ENCODE measurements at regions of chr6 and their contacts with region 1.

Region 1: DNA sequence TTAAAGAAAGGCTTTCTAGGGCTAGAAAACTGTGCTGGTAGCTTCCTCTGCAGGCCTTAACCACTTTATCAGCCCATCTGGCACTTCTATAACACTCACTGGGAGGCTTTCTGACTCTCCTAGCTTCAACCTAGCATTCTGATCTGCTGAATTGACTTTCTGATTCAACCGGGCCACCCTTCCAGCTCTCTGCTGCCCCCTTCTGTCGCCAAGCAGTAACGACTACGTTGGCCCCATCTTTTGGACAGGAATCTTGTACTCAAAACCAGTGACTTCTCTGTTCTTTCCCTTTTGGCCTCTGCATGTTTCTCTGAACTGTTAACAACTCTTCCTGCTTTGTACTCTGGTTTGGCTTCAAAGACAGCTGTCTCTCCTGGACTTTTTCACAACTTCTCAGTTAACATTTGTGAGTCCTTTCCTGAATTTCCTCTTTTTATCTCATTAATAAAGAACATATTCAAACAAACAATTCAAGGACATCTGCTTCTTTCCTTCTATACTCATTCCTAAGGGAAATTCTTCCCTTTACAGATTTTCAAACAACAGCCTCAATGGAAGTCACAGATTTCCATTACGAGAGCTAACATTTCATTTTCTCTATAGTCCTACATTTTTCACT is 43.9 kb upstream of the FAM135A start:
- DNase-seq: peak; percentile 41
- ATAC-seq: peak; percentile 87
- H3K4me3 ChIP-seq: no peak overlapping the region
- H3K27ac ChIP-seq: no peak overlapping the region
- H3K4me1 ChIP-seq: no peaks in the 10 kb centered on the region
- H3K27me3 ChIP-seq: peaks cover 1 to 13% of the 10 kb centered on the region in 2 experiments; a peak in 2 of 5 replicates
- CTCF ChIP-seq: peak; percentile 89
- EP300 ChIP-seq: no peak
- POLR2A ChIP-seq: no peak
- RAD21 ChIP-seq: peak; percentile 55; the same call in 1 of the 2 replicates

Region 2: DNA sequence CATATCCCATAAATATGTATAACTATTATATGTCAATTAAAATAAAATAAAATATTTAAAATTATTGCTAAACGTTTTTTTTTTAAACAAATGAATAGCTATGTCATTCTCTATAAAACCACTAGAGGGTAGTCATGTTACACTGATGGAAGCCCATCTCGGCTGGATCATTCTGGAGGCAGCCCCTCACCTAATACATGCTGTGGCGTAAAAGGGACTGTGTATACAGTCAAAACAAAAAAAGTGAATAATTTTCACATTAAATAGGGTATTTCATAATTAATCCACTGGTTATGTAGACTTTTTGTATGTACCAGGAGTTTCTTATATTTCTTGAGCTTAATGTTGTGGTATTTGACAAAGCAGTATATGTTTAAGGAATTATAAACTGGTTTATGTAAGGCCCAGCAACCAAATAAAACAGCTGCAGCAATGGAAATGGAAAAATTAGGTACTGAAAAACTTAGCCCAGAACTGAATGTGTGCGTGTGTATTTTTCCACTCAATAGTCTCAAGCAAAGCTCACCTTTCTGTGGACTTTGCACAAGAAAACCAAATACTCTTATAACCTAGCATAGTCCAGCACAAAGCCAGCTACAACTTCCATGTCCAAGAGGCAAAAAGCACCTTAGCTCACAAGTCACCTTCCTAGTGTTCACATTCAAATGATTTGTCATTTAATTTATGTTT is 148.3 kb before region 1 on chr6:
- CTCF ChIA-PET with region 1: interaction called, 14 read pairs
- POLR2A ChIA-PET with region 1: no interaction called
- in situ Hi-C with region 1: loop called (anchors 5 kb)
- intact Hi-C with region 1: loop called (anchors 1 kb)
- DNase-seq: peak; percentile 12
- ATAC-seq: peak; percentile 84
- H3K4me3 ChIP-seq: peak overlapping the region in 1 of 3 experiments; percentile 10; a peak in 1 of 6 replicates
- H3K27ac ChIP-seq: no peak overlapping the region
- H3K4me1 ChIP-seq: peaks cover 16% of the 10 kb centered on the region
- H3K27me3 ChIP-seq: peaks cover 0 to 4% of the 10 kb centered on the region in 2 experiments; a peak in 1 of 5 replicates
- CTCF ChIP-seq: peak; percentile 66
- EP300 ChIP-seq: no peak
- POLR2A ChIP-seq: no peak
- RAD21 ChIP-seq: 0 out of 2 replicates have a peak, but pooled peaks have one; percentile 35

Region 3: GRCh38 chr6:70304616-70305015 is 64.8 kb before region 1 on chr6:
- CTCF ChIA-PET with region 1: interaction called, 37 read pairs
- POLR2A ChIA-PET with region 1: no interaction called
- in situ Hi-C with region 1: loop called (anchors 5 kb)
- intact Hi-C with region 1: no loop called
- DNase-seq: no peak
- ATAC-seq: no peak
- H3K4me3 ChIP-seq: no peak overlapping the region
- H3K27ac ChIP-seq: no peak overlapping the region
- H3K4me1 ChIP-seq: no peaks in the 10 kb centered on the region
- H3K27me3 ChIP-seq: peaks cover 0 to 2% of the 10 kb centered on the region in 2 experiments; a peak in 1 of 5 replicates
- CTCF ChIP-seq: no peak
- EP300 ChIP-seq: no peak
- POLR2A ChIP-seq: no peak
- RAD21 ChIP-seq: no peak

Region 4: GRCh38 chr6:70310063-70310694 is 59.3 kb before region 1 on chr6:
- CTCF ChIA-PET with region 1: interaction called, 37 read pairs
- POLR2A ChIA-PET with region 1: no interaction called
- in situ Hi-C with region 1: loop called (anchors 5 kb)
- intact Hi-C with region 1: loop called (anchors 1 kb)
- DNase-seq: peak; percentile 33
- ATAC-seq: no peak
- H3K4me3 ChIP-seq: no peak overlapping the region
- H3K27ac ChIP-seq: no peak overlapping the region
- H3K4me1 ChIP-seq: no peaks in the 10 kb centered on the region
- H3K27me3 ChIP-seq: no peaks in the 10 kb centered on the region
- CTCF ChIP-seq: peak; percentile 68
- EP300 ChIP-seq: no peak
- POLR2A ChIP-seq: no peak
- RAD21 ChIP-seq: 0 out of 2 replicates have a peak, but pooled peaks have one; percentile 35

Region 5: GRCh38 chr6:70336996-70337742 is 32.3 kb before region 1 on chr6:
- CTCF ChIA-PET with region 1: no interaction called
- POLR2A ChIA-PET with region 1: no interaction called
- in situ Hi-C with region 1: no loop called
- intact Hi-C with region 1: loop called (anchors 1 kb)
- DNase-seq: no peak
- ATAC-seq: no peak
- H3K4me3 ChIP-seq: no peak overlapping the region
- H3K27ac ChIP-seq: no peak overlapping the region
- H3K4me1 ChIP-seq: no peaks in the 10 kb centered on the region
- H3K27me3 ChIP-seq: peaks cover 0 to 3% of the 10 kb centered on the region in 2 experiments; a peak in 1 of 5 replicates
- CTCF ChIP-seq: no peak
- EP300 ChIP-seq: no peak
- POLR2A ChIP-seq: no peak
- RAD21 ChIP-seq: no peak

Region 6: GRCh38 chr6:70413114-70413991 is 43.9 kb after region 1 on chr6 and contains the start of gene FAM135A:
- CTCF ChIA-PET with region 1: no interaction called
- POLR2A ChIA-PET with region 1: interaction called, 6 read pairs
- in situ Hi-C with region 1: no loop called
- intact Hi-C with region 1: loop called (anchors 2 kb)
- DNase-seq: peak; percentile 97
- ATAC-seq: peak; percentile 95
- H3K4me3 ChIP-seq: peak within 1 kb of the TSS; percentile 90 to 100 (median 94)
- H3K27ac ChIP-seq: peak within 1 kb of the TSS; percentile 72
- H3K4me1 ChIP-seq: peaks cover 40% of the 10 kb centered on the region
- H3K27me3 ChIP-seq: no peaks in the 10 kb centered on the region; a peak in 1 of 5 replicates
- CTCF ChIP-seq: no peak
- EP300 ChIP-seq: peak in 1 of 2 experiments; percentile 19; a peak in 1 of 4 replicates
- POLR2A ChIP-seq: peak; percentile 77 to 98
- RAD21 ChIP-seq: no peak
- total RNA-seq, gene FAM135A: 26.9 and 32.9 TPM in 2 replicates

Region 7: DNA sequence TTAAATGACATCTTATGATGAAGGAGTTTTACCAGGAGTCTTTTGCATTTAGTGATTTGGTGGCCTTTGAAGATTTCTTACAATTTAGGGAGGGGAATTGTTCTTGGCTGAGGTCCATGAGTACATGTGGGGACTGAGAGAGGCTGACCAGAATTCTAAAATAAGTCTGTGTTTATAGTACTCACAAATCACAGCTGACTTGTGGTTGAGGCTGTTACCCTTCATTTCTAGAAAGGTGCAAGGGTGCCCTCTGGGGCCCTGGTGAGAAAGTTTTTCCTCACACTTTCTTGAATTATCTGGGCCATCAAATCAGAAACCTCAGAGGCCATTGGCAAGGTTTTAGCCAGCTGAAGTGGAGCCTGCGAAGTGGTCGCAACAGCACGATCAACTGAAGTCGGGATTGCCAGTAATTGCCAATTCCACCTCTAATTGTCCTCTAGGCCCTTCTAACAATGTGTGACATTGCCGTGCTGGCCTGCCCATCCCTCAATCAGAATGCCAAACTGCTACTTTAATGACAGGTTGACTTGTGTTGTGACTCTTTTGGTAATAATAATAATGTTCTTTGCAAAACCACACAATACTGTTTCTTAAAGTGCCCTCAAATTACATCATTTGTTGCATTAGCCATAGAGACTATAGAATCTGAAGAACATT is 1140.7 kb after region 1 on chr6:
- CTCF ChIA-PET with region 1: no interaction called
- POLR2A ChIA-PET with region 1: no interaction called
- in situ Hi-C with region 1: no loop called
- intact Hi-C with region 1: no loop called
- DNase-seq: peak; percentile 9
- ATAC-seq: no peak
- H3K4me3 ChIP-seq: no peak overlapping the region
- H3K27ac ChIP-seq: no peak overlapping the region
- H3K4me1 ChIP-seq: no peaks in the 10 kb centered on the region
- H3K27me3 ChIP-seq: no peaks in the 10 kb centered on the region
- CTCF ChIP-seq: peak; percentile 29; the same call in 1 of the 2 replicates
- EP300 ChIP-seq: no peak
- POLR2A ChIP-seq: no peak
- RAD21 ChIP-seq: no peak

Measured in HepG2 (cell line).